ENCODE measurements at regions of chr1 and their contacts with region 1.

Region 1: DNA sequence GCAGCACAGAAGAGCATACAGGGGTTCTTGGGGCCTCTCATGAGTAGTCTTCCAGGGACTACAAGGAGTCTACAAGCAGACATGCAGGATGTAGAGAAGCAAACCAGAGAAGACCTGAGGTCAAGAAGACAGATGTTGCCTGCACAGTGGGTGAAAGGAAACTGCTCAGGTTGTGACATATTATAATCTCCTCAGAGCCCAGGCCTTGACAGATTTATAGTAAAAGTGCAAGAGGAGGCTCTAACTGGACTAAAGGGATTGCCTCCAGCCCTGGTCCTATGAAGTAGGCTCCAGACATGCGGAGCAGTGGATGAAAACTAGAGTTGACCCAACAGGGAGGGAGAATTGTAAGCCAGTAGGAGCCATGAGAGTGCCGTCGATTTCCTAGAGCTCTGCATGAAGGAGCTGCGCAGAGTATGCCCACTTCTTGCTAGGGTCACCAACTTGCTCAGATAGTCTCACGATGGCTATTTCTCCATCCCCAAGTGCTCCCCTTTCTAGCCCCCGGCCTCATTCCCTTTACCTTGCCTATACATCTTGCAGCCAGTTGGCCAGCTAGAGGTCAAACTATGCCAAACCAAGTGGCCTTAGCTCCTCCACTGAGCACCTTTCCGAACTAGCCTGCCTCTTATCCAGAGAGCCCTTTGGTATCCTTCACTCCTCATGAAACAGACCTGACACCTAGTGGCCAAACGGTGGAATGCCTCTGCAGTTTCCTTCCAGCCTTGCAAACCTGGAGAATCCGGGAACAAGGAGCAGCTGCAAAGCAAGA is 36.2 kb upstream of the IPO9 start:
- DNase-seq: peak; percentile 71 to 87
- H3K4me3 ChIP-seq: no peak overlapping the region
- H3K27ac ChIP-seq: no peak overlapping the region
- H3K4me1 ChIP-seq: no peaks in the 10 kb centered on the region
- H3K27me3 ChIP-seq: no peaks in the 10 kb centered on the region
- CTCF ChIP-seq: peak; percentile 80 to 99 (median 96)
- EP300 ChIP-seq: no peak
- POLR2A ChIP-seq: no peak
- RAD21 ChIP-seq: peak; percentile 99 to 100

Region 2: DNA sequence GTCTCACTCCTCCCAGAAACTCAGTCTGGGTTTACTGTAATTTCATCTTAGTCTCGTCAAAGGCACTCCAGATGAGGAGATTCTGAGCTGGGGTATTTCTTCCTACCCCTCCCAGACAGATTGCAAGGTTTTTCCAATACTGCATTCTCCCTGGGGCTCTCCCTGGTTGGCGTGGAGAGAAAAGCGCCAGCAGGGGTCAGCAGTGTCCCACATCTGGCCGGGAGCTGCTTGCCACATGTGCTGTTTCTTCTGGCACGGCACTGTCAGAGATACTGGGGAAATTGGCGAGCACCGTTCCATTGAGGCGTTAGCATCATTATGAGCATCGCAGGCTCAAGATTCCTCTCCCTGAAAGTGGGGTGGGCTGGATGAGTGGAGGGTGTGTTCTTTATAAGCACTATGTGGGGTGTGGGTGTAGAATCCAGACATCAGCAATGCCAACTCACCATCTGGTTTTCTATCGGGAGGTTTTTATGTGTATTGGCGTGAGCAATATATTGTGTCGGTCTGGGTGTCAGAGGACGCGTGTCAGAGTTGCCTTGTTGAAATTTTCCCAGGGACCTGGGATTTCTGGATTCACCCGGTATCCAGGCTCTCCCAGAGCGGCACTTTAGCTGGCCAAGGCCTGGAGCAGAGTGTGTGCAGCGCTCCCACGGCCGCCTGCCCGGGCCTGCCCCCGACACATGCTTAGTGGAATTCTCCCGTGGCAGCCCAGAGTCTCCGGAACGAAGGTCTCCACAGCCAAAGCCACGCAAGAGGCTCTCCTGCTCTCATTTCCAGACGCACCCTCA is 261.8 kb before region 1 on chr1:
- CTCF ChIA-PET with region 1: interaction called, 19 read pairs
- POLR2A ChIA-PET with region 1: no interaction called
- DNase-seq: peak in 1 of 2 experiments; percentile 90
- H3K4me3 ChIP-seq: no peak overlapping the region
- H3K27ac ChIP-seq: no peak overlapping the region
- H3K4me1 ChIP-seq: peaks cover 0 to 5% (median 3%) of the 10 kb centered on the region in 4 experiments; a peak in 3 of 7 replicates
- H3K27me3 ChIP-seq: no peaks in the 10 kb centered on the region
- CTCF ChIP-seq: peak; percentile 88 to 92 (median 91)
- EP300 ChIP-seq: no peak
- POLR2A ChIP-seq: no peak
- RAD21 ChIP-seq: peak; percentile 96

Region 3: DNA sequence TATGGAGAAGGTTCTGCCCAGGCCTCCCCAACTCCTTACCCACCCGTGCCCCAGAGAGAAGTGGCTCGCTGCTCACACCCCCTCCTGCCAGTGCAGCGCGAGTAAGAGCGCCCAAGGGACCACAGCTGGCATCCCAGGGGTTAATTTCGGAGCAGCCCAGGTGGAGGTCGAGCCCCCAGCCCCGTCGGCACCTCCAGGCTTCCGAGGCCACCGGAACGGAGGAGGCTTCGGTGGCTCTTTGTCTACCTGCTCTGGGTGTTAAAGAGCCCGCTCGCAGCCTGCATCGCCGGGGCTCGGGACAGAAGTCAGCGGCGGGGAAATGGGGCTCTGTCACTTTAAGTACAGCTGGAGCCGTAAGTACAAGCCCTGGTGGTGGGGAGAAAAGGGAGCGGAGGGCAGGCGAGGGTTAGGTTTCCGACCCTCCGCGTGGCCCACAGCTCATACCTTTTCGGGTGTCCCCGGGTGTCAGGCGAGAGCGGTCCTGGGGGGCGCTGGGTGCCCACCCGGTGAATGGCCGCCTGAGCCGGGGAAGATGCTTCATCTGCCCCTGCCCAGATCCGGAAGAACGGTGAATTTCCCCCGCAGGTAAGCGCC is 53.1 kb before region 1 on chr1:
- CTCF ChIA-PET with region 1: interaction called, 20 read pairs
- POLR2A ChIA-PET with region 1: no interaction called
- DNase-seq: peak in 1 of 2 experiments; percentile 77
- H3K4me3 ChIP-seq: peak overlapping the region; percentile 70 to 86 (median 84)
- H3K27ac ChIP-seq: no peak overlapping the region
- H3K4me1 ChIP-seq: peaks cover 37 to 49% (median 44%) of the 10 kb centered on the region in 4 experiments
- H3K27me3 ChIP-seq: no peaks in the 10 kb centered on the region
- CTCF ChIP-seq: no peak
- EP300 ChIP-seq: no peak
- POLR2A ChIP-seq: no peak
- RAD21 ChIP-seq: no peak; a peak in 1 of 4 replicates

Region 4: GRCh38 chr1:201763455-201764140 is 29.1 kb before region 1 on chr1:
- CTCF ChIA-PET with region 1: interaction called, 19 read pairs
- POLR2A ChIA-PET with region 1: no interaction called
- DNase-seq: no peak
- H3K4me3 ChIP-seq: no peak overlapping the region
- H3K27ac ChIP-seq: no peak overlapping the region
- H3K4me1 ChIP-seq: peaks cover 0 to 11% (median 3%) of the 10 kb centered on the region in 4 experiments; a peak in 4 of 7 replicates
- H3K27me3 ChIP-seq: no peaks in the 10 kb centered on the region
- CTCF ChIP-seq: no peak
- EP300 ChIP-seq: no peak
- POLR2A ChIP-seq: no peak
- RAD21 ChIP-seq: no peak

Region 5: GRCh38 chr1:201778279-201779065 is 14.2 kb before region 1 on chr1:
- CTCF ChIA-PET with region 1: interaction called, 72 read pairs
- POLR2A ChIA-PET with region 1: no interaction called
- DNase-seq: no peak
- H3K4me3 ChIP-seq: no peak overlapping the region
- H3K27ac ChIP-seq: no peak overlapping the region
- H3K4me1 ChIP-seq: no peaks in the 10 kb centered on the region
- H3K27me3 ChIP-seq: no peaks in the 10 kb centered on the region
- CTCF ChIP-seq: no peak
- EP300 ChIP-seq: no peak
- POLR2A ChIP-seq: no peak
- RAD21 ChIP-seq: no peak

Region 6: DNA sequence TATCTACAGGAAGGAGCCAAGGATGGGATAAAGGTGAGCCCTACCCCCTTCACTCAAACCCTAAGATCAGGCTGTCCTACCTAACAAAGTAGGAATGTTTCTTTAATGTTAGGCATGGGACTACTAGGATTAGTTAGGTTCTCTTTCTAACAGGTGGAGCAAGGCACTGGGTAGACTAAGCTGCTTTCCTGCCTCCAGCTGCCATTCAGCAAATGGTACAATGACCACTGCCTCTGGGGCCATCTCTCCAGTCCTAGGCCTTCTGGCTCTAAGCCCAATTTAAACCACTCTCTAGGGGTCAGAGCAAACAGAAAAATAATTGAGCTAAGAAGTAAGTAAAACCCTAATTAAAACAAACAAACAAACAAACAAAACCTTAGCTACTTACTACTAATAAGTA is 20.5 kb after region 1 on chr1:
- CTCF ChIA-PET with region 1: interaction called, 41 read pairs
- POLR2A ChIA-PET with region 1: no interaction called
- DNase-seq: no peak
- H3K4me3 ChIP-seq: no peak overlapping the region
- H3K27ac ChIP-seq: no peak overlapping the region
- H3K4me1 ChIP-seq: no peaks in the 10 kb centered on the region
- H3K27me3 ChIP-seq: no peaks in the 10 kb centered on the region
- CTCF ChIP-seq: no peak
- EP300 ChIP-seq: no peak
- POLR2A ChIP-seq: no peak
- RAD21 ChIP-seq: no peak

Region 7: DNA sequence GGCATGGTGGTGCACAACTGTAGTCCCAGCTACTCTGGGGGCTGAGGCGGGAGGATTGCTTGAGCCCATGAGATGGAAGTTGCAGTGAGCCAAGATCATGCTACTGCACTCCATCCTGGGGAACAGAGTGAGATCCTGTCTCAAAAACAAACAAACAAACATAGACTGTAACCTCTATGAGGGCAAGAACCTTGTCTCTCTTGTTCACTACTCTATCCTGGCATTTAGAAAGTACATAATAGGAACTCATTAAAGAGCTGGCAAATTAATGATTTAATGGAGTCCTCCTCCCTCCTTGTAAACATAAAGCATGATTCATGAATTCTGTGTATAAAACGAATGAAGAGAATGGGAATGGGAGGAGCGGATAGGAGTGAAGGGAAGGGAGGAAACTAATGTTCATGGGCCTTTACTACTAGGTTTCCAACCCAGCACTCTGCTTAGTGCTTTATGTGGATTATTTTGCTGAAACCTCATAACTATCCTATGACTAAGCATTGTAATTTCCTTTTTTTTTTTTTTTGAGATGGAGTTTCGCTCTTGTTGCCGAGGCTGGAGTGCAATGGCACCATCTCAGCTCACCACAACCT is 145.0 kb after region 1 on chr1:
- CTCF ChIA-PET with region 1: no interaction called
- POLR2A ChIA-PET with region 1: no interaction called
- DNase-seq: no peak
- H3K4me3 ChIP-seq: no peak overlapping the region
- H3K27ac ChIP-seq: no peak overlapping the region
- H3K4me1 ChIP-seq: peaks cover 4 to 7% (median 4%) of the 10 kb centered on the region in 4 experiments; a peak in 5 of 7 replicates
- H3K27me3 ChIP-seq: no peaks in the 10 kb centered on the region
- CTCF ChIP-seq: no peak
- EP300 ChIP-seq: no peak
- POLR2A ChIP-seq: no peak
- RAD21 ChIP-seq: no peak